Ovary (tissue), 10 donors: ENCODE measurements at regions of chr18 and their contacts with region 1.

Region 1: DNA sequence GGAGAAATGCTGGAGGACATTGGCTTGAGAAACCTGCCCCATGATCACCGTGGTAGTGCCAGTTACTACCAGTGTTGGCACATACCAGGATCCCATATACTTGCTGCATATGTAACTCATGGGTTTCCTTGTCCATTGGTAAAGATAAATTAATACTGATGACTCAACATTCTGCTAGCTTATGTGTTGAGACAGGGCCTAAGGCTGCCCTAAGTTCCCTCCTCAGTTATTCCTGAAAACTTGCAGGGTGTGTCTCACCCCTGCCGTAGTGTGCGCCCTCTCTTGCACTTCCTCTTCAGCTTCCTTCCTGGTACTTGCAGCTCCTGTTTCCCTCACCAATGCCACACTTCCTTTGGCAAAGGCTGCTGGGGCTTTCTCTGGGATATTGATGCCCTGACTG is 4.3 kb upstream of the INO80C start:
- DNase-seq: no peak
- H3K4me3 ChIP-seq: no peak overlapping the region
- H3K27ac ChIP-seq: no peak overlapping the region
- H3K4me1 ChIP-seq: no peaks in the 10 kb centered on the region
- H3K27me3 ChIP-seq: no peaks in the 10 kb centered on the region
- CTCF ChIP-seq: no peak
- EP300 ChIP-seq: no peak
- POLR2A ChIP-seq: no peak

Region 2: GRCh38 chr18:35580701-35581539 is 78.9 kb after region 1 on chr18:
- intact Hi-C with region 1: loop called in 1 of 4 experiments (anchors 10 kb)
- DNase-seq: peak; percentile 55 to 75 (median 69)
- H3K4me3 ChIP-seq: peak overlapping the region; percentile 81
- H3K27ac ChIP-seq: peak overlapping the region; percentile 81 to 98
- H3K4me1 ChIP-seq: peaks cover 4% of the 10 kb centered on the region
- H3K27me3 ChIP-seq: no peaks in the 10 kb centered on the region
- CTCF ChIP-seq: no peak
- EP300 ChIP-seq: no peak
- POLR2A ChIP-seq: no peak